Prostate gland (tissue), 2 donors: ENCODE measurements at regions of chr5 and their contacts with region 1.

Region 1: GRCh38 chr5:172697123-172698121 is 56.4 kb downstream of the NEURL1B start:
- DNase-seq: peak; percentile 86
- H3K4me3 ChIP-seq: peak overlapping the region; percentile 43 to 44
- H3K27ac ChIP-seq: peak overlapping the region; percentile 71 to 78
- H3K4me1 ChIP-seq: peaks cover 9% of the 10 kb centered on the region
- H3K27me3 ChIP-seq: no peaks in the 10 kb centered on the region
- CTCF ChIP-seq: peak; percentile 86 to 96 (median 95)
- POLR2A ChIP-seq: peak; percentile 51

Region 2: DNA sequence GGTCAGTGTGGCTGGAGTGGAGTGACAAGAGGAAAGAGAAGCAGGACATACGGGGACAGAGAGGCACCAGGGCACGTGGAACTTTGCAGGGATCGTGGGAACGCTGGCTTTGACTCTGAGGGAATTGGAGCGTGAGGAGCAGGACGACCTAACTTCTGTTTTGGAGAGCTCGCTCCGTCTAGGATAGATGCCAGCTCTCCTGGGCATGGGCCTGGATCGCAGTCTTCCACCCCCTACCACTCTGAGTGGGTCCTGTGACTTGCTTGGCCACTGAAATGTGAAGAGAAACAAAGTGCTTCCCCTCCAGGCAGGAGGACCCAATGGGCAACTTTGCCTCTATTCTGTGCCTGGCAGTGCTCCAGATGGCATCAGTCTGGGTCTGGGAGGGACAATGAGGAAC is 234.4 kb before region 1 on chr5:
- intact Hi-C with region 1: loop called (anchors 5 kb)
- DNase-seq: no peak
- H3K4me3 ChIP-seq: no peak overlapping the region
- H3K27ac ChIP-seq: no peak overlapping the region
- H3K4me1 ChIP-seq: no peaks in the 10 kb centered on the region
- H3K27me3 ChIP-seq: no peaks in the 10 kb centered on the region
- CTCF ChIP-seq: no peak
- POLR2A ChIP-seq: no peak

Region 3: DNA sequence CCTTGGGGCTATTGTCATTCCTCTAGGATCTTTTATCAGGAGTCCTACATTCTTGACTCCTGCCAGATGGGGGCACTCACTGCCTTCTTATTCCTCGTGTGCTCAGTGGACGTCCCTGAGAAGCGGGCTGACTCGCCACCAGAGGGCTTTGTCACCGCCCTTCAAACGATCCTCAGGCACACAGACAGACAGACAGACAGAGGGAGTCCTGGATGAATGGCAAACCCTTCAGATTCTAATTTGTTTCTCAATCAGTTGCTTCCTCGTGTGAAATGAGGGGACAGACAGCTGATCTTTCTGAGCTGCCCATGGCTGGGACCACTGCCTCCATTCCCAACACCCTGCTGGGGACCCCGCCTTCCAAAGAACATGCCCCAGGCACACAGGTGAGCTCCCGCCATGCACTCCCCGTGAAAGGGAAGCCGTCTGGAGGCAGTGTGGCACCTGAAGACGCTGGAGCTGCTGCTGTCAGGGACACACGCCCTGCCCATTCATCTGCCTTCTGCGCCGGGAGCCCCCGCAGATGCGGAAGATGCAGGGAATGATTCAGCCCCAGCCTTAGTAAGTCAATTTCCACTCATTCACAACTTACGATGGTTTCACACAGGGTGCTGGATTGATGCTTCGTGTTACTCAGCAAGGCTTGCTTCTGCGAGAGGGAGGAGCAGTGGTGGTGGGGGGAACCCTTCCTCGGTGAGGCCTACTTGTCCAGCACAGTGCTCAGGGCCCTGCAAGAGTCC is 218.2 kb before region 1 on chr5:
- intact Hi-C with region 1: loop called (anchors 1 kb)
- DNase-seq: peak; percentile 83
- H3K4me3 ChIP-seq: no peak overlapping the region
- H3K27ac ChIP-seq: no peak overlapping the region
- H3K4me1 ChIP-seq: no peaks in the 10 kb centered on the region
- H3K27me3 ChIP-seq: no peaks in the 10 kb centered on the region
- CTCF ChIP-seq: peak; percentile 77 to 99 (median 90)
- POLR2A ChIP-seq: no peak

Region 4: DNA sequence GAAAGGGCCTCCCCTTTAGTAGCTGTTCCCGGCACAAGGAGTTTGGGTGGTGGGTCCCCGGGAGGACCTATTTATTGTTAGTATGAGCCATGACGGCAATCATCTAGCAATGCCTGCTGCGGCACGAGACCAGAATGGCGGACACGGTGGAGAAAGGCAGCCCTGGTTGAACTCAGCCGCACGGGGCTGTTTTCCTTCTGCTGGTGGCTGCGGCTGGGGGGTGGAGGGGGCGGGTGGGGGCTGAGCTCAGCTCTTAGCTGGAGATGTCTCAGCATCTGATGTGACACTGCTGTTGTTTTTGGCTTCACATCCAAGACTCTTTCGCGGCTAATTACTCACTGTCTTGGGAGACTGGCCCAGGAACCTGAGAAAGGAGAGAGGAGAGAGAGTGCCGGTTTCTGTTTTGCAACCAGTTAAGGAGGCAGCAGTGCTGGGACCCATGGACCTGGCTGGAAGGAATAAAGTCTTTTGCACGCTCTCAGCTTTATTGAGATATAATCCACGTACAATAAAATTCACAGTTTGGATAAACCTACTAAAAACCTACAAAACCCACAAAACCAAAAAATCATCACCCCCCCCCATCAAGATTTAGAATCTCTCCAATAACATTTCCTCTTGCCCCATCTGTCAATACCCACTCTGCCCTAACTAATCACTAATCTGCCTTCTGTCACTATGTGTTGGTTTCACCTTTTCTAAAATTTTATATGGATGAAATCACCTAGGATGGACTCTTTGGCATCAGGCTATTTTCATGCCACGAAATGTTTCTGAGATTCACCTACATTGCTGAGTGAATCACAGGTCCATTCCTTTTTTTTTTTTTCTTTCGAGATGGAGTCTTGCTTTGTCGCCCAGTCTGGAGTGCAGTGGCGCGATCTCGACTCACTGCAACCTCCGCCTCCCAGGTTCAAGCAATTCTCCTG is 138.2 kb before region 1 on chr5:
- intact Hi-C with region 1: loop called (anchors 2 kb)
- DNase-seq: peak; percentile 69
- H3K4me3 ChIP-seq: peak overlapping the region; percentile 14 to 15
- H3K27ac ChIP-seq: peak overlapping the region; percentile 74 to 82
- H3K4me1 ChIP-seq: peaks cover 18% of the 10 kb centered on the region
- H3K27me3 ChIP-seq: no peaks in the 10 kb centered on the region
- CTCF ChIP-seq: no peak
- POLR2A ChIP-seq: no peak

Region 5: GRCh38 chr5:172640822-172641358 is 56.5 kb before region 1 on chr5 and contains the start of gene NEURL1B:
- intact Hi-C with region 1: loop called (anchors 1 kb)
- DNase-seq: peak; percentile 78
- H3K4me3 ChIP-seq: peak within 1 kb of the TSS; percentile 62 to 83
- H3K27ac ChIP-seq: peak within 1 kb of the TSS; percentile 83 to 86
- H3K4me1 ChIP-seq: peaks cover 3% of the 10 kb centered on the region
- H3K27me3 ChIP-seq: no peaks in the 10 kb centered on the region
- CTCF ChIP-seq: peak in 1 of 4 experiments; percentile 28
- POLR2A ChIP-seq: peak; percentile 60
- total RNA-seq, gene NEURL1B: 23.9 to 39.9 TPM